ENCODE measurements at regions of chr19 and their contacts with region 1.

Region 1: DNA sequence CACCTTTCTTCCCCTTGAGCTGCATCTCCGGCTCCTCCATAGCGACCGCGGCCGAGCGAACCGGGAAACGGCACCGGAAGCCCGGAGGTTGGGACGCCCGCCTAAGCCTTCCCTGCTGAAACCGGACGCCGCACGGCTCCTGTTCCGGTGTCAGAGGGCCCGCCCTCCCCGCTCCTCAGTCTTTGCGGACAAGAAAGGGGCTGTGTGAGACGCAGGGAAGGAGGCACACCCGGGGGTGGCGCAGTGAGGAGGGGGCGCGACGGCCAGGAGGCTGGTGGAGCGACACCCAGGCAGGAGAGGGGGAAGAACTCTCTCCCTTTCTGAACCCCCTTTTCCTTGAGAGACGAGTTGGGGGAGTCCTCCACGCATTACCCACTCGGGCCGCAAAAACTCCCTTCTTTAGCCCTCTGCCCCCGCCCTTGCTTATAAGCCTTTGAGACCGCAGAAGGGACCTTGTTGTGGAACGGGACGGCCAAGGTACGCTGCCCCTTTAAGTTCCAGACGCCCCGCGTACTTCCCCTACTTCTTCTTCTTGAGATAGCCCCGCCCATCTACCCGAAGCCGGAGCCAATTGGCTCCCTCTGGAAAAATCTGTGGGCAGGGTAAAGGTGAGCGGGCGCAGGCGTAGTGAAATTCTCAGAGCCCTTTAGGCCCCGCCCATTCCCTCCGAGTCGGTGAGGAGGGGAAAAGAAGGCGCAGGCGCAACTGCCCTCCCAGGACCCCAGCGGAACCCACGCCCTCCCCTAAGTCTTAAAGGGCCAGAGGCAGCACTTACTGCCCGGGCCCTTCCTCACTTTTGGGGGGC is at the starts of genes BORCS8 and RFXANK:
- DNase-seq: peak; percentile 100
- H3K4me3 Mint-ChIP-seq: peak within 1 kb of the TSS; percentile 96
- H3K27ac Mint-ChIP-seq: peak within 1 kb of the TSS; percentile 96
- H3K4me1 Mint-ChIP-seq: peaks cover 38% of the 10 kb centered on the region
- H3K27me3 Mint-ChIP-seq: no peaks in the 10 kb centered on the region
- total RNA-seq, gene BORCS8: 16.4 to 17.8 TPM
- total RNA-seq, gene RFXANK: 73.7 to 78.1 TPM

Region 2: GRCh38 chr19:19063183-19064097 is 128.8 kb before region 1 on chr19 and contains the start of gene SLC25A42:
- CTCF ChIA-PET with region 1: no interaction called
- POLR2A ChIA-PET with region 1: no interaction called
- intact Hi-C with region 1: loop called (anchors 5 kb)
- DNase-seq: peak; percentile 99
- H3K4me3 Mint-ChIP-seq: peak within 1 kb of the TSS; percentile 79
- H3K27ac Mint-ChIP-seq: peak within 1 kb of the TSS; percentile 72
- H3K4me1 Mint-ChIP-seq: peaks cover 31% of the 10 kb centered on the region
- H3K27me3 Mint-ChIP-seq: no peaks in the 10 kb centered on the region
- total RNA-seq, gene SLC25A42: 12.2 to 12.4 TPM

Region 3: DNA sequence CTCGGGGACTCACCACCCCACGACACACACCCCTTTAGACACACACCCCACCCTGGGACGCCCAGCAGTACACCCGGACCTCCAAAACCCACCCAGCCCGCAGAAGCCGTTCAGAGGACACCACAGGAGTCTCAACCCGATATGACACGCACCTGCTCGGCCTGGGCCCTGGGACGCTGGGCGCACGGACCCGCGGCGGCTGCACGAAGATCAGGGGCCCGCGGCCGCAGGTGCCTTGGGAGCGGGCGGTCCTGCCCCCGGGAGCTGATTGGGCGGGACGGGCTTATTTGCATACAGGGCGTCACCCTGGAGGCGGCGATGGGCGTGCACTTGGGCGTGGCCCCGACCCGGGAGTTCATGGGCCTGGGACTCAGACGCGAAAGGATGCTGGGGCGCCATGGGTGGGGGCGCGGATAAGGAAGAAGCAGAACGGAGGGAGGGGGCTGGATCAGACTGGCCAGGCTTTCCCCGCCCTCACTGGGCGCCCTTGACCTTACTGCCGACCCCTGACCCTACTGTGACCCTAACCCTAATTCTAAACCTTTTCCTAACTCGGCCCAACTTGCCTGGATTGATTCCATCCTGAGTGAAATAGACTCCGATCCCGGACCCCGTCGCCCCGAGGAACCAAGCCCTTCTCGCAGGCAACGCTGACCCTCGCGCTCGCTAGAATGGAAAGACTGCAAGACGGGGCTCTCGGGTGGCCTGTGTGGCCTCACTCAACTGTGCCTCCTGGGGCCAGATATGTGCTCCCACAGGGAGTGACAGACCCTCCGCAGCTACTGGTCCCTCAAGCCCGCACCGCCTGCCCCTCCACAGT is 22.0 kb before region 1 on chr19 and contains the start of gene MEF2B:
- CTCF ChIA-PET with region 1: interaction called, 14 read pairs
- POLR2A ChIA-PET with region 1: no interaction called
- intact Hi-C with region 1: no loop called
- DNase-seq: peak; percentile 83
- H3K4me3 Mint-ChIP-seq: peak within 1 kb of the TSS; percentile 1
- H3K27ac Mint-ChIP-seq: no peak within 1 kb of the TSS
- H3K4me1 Mint-ChIP-seq: peaks cover 13% of the 10 kb centered on the region
- H3K27me3 Mint-ChIP-seq: no peaks in the 10 kb centered on the region
- total RNA-seq, gene MEF2B: 3.9 to 4.3 TPM

Region 4: DNA sequence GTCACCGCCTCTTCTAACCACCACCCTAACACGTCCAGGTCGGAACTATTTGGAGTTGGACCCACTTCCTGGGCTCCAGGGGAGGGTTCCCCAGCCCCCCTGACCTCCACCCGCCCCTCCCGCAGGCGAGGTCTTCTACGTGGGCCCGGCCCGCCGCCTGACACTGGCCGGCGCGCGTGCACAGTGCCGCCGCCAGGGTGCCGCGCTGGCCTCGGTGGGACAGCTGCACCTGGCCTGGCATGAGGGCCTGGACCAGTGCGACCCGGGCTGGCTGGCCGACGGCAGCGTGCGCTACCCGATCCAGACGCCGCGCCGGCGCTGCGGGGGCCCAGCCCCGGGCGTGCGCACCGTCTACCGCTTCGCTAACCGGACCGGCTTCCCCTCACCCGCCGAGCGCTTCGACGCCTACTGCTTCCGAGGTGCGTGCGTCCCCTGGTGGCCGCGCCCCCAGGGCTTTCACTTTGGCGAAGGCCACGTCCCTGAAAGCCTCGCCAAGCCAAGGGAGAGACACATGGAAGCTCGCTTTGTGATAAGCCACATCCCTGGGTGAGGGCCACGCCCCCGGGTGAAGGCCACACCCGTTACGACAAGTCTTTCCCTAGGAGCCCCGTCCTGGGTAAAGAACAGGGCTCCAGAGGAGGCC is 32.7 kb after region 1 on chr19:
- CTCF ChIA-PET with region 1: interaction called, 10 read pairs
- POLR2A ChIA-PET with region 1: no interaction called
- intact Hi-C with region 1: no loop called
- DNase-seq: peak; percentile 83
- H3K4me3 Mint-ChIP-seq: peak overlapping the region; percentile 62
- H3K27ac Mint-ChIP-seq: no peak overlapping the region
- H3K4me1 Mint-ChIP-seq: no peaks in the 10 kb centered on the region
- H3K27me3 Mint-ChIP-seq: peaks cover 13% of the 10 kb centered on the region

Region 5: GRCh38 chr19:19361075-19361594 is 168.9 kb after region 1 on chr19:
- CTCF ChIA-PET with region 1: no interaction called
- POLR2A ChIA-PET with region 1: no interaction called
- intact Hi-C with region 1: loop called (anchors 5 kb)
- DNase-seq: peak; percentile 88
- H3K4me3 Mint-ChIP-seq: no peak overlapping the region
- H3K27ac Mint-ChIP-seq: no peak overlapping the region
- H3K4me1 Mint-ChIP-seq: peaks cover 29% of the 10 kb centered on the region
- H3K27me3 Mint-ChIP-seq: no peaks in the 10 kb centered on the region